ENCODE measurements at regions of chr1 and their contacts with region 1.

Region 1: GRCh38 chr1:172144445-172145061 is 275.9 kb upstream of the C1orf105 start:
- DNase-seq: peak; percentile 67 to 86
- ATAC-seq: peak; percentile 93 to 98 (median 96)
- H3K4me3 ChIP-seq: peak overlapping the region; percentile 29 to 63 (median 56)
- H3K27ac ChIP-seq: peak overlapping the region; percentile 61 to 91 (median 84)
- H3K4me1 ChIP-seq: peaks cover 0 to 41% (median 16%) of the 10 kb centered on the region in 9 donors
- H3K27me3 ChIP-seq: no peaks in the 10 kb centered on the region
- CTCF ChIP-seq: no peak

Region 2: DNA sequence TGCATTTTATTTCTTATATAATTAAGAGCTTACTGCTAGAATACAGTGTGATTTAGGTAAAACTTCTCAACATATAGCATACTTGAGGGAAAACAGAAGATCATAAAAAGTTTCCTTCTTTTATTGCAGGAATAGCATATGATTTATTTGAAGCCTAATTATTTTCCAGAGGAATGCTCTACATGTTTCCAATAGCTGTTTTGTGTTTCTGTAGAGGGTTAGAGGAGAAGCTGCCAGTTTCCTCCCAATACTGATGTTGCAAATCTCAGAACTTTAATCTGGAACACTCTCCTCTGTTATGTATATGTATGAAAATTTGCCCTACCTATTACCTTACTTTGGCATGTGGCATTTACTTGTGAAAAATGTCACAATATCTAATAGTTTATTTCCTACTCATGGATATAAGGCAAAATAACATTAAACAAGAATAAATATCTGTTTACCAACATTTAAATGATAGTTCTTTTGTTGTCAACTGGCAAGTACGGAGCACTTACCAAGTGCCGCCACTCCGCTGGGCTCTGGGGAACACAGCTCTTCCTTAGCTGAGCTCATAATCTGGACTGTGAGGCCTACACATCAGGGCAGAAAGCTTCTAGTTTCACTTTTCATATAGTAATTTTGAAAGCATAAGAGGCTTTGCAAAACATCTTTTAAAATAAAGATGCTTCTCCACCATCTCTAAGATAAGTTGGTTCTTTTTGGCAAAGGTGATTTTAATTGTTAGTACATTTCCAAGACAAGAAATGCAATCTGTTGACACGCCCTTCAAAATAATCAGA is 36.1 kb after region 1 on chr1:
- intact Hi-C with region 1: loop called in 2 of 10 experiments (anchors 2 to 5 kb)
- DNase-seq: peak; percentile 43 to 55
- ATAC-seq: peak; percentile 69 to 96 (median 92)
- H3K4me3 ChIP-seq: peak overlapping the region in 8 of 10 donors; percentile 0 to 43 (median 22)
- H3K27ac ChIP-seq: peak overlapping the region; percentile 59 to 88 (median 79)
- H3K4me1 ChIP-seq: peaks cover 0 to 36% (median 24%) of the 10 kb centered on the region in 9 donors
- H3K27me3 ChIP-seq: no peaks in the 10 kb centered on the region
- CTCF ChIP-seq: no peak

Region 3: GRCh38 chr1:172322219-172323061 is 177.9 kb after region 1 on chr1:
- intact Hi-C with region 1: loop called in 1 of 10 experiments (anchors 10 kb)
- DNase-seq: peak; percentile 17 to 37
- ATAC-seq: peak; percentile 82 to 94 (median 88)
- H3K4me3 ChIP-seq: peak overlapping the region in 4 of 10 donors; percentile 0 to 18 (median 10)
- H3K27ac ChIP-seq: peak overlapping the region in 9 of 10 donors; percentile 37 to 68 (median 61)
- H3K4me1 ChIP-seq: peaks cover 0 to 29% (median 18%) of the 10 kb centered on the region in 9 donors
- H3K27me3 ChIP-seq: no peaks in the 10 kb centered on the region
- CTCF ChIP-seq: no peak

Measured in heart right ventricle (tissue), 16 donors.